ENCODE measurements at regions of chr16 and their contacts with region 1.

Region 1: DNA sequence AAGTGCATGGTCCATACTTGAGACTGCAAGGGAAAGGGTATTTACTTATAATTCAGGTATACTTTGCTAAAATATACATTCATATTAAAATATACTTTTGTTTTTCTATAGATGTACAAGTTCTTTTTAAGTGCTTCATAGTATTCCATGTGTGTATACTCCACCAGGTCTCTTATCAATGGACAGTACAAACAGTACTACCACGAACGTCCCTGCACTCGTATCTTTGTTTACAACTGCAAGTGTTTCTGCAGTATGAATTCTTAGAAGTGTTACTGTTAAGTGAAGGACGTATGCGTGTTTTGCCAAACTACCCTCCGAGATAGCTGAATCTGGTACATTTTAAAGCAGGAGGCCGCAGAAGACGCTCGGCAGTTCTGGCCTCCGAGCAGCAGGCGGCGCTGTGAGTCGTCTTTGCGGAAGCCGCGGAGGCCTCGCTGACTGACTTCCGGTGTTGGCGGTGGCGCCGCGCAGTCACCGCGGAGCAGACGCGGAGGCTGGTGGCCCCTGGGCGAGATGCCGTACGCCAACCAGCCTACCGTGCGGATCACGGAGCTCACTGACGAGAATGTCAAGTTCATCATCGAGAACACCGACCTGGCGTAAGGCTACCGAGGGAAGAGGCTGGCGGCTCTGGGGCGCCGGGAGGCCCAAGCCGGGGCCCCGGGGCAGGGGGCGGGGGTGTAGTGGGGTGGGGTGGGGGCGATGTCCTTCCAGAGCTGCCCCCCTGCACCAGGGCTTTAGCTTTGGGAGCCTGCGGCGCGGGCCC is at the start of gene POLR2C:
- DNase-seq: peak; percentile 95
- H3K4me3 Mint-ChIP-seq: peak within 1 kb of the TSS; percentile 100
- H3K27ac Mint-ChIP-seq: peak within 1 kb of the TSS; percentile 99
- H3K4me1 Mint-ChIP-seq: peaks cover 30% of the 10 kb centered on the region
- H3K27me3 Mint-ChIP-seq: no peaks in the 10 kb centered on the region
- total RNA-seq, gene POLR2C: 49.4 to 53.0 TPM

Region 2: DNA sequence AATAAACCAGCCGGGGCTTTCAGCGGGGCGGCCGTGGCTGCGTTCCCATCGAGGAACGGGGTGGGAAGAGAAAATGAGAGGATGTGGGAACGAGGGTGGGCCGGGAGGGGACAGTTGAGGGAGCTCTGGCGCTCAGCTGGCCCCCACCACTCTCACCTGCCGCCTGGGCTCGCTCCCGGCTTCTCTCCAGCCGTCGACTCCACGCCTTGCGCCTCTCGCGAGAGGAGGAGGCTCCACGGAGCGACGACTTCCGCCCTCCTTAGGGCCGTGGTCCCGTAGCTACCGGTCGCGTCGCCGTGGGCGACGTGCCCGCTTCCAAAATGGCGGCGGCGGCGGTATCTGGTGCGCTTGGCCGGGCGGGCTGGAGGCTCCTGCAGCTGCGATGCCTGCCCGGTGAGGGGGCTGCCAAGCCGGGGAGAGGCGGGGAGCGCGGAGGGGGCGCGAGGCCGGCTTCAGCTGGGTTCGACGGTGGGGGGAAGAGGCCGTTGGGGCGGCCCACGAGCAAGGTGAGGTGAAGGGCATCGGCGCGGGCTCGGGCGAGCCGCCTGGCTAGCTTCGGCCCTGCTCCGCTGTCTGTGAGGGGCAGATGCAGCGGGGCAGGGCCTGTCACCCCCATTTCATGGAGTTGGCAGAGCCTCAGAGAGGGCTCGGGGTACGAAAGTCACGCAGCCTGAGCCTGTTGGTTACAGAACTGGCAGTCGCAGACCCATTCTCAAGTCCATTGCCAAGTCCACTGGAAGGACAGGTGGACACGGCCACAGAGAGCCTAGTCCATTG is 15.0 kb before region 1 on chr16 and contains the starts of genes CIAPIN1 and COQ9:
- CTCF ChIA-PET with region 1: interaction called, 14 read pairs
- intact Hi-C with region 1: loop called (anchors 1 kb)
- DNase-seq: peak; percentile 96
- H3K4me3 Mint-ChIP-seq: peak within 1 kb of the TSS; percentile 86
- H3K27ac Mint-ChIP-seq: peak within 1 kb of the TSS; percentile 86
- H3K4me1 Mint-ChIP-seq: peaks cover 42% of the 10 kb centered on the region
- H3K27me3 Mint-ChIP-seq: no peaks in the 10 kb centered on the region
- total RNA-seq, gene CIAPIN1: 29.5 to 31.0 TPM
- total RNA-seq, gene COQ9: 30.6 TPM

Region 3: DNA sequence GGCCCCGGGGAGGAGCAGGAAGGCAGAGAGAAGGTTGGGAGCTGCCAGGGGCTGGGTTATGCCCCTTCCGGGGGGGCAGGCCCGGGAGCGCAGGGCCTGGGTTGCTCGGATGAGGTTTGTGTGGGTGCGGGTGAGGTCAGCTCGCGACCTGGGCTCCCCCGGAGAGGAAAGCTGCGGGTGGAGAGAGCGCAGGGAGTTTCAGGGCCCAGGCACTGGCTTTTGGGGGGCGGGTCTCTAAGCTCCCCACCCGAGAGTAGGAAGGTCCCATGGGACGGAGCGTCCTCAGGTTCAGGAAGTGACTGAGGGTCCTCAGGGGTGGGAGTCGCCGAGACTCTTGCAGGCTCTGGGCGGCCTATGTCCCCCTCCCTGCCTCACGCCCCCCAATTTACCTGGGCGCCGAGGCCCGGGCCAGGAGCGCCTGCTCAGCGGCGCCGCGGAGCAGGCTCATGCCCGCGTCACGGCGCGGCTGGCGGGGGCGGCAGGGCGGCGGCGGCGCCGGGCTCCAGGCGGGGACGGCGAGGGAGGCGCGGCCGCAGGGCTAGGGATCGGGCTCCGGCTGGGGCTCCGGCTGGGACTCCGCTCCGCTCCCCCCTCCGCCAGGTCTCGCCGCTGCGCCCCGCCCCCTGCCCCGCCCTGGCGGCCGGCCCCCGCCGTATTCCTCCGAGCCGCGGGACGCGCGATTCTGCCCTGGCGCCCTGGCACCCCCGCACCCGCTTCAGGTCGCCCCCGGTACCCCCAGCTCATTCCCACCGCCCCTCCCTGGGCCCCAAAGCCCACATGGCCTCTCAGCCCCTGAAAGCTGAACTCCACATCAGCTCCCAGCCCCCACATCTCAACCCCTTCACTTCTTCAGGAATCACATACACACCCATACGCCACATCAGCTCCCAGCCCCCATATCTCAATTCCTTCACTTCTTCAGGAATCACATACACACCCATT is 23.8 kb after region 1 on chr16 and contains the start of gene DOK4:
- CTCF ChIA-PET with region 1: interaction called, 5 read pairs
- intact Hi-C with region 1: loop called (anchors 1 kb)
- DNase-seq: peak; percentile 79
- H3K4me3 Mint-ChIP-seq: peak within 1 kb of the TSS; percentile 77
- H3K27ac Mint-ChIP-seq: peak within 1 kb of the TSS; percentile 63
- H3K4me1 Mint-ChIP-seq: peaks cover 18% of the 10 kb centered on the region
- H3K27me3 Mint-ChIP-seq: no peaks in the 10 kb centered on the region
- total RNA-seq, gene DOK4: 5.0 to 6.2 TPM

Region 4: GRCh38 chr16:57519796-57520360 is 57.5 kb after region 1 on chr16:
- CTCF ChIA-PET with region 1: interaction called, 63 read pairs
- intact Hi-C with region 1: no loop called
- DNase-seq: peak; percentile 87
- H3K4me3 Mint-ChIP-seq: no peak overlapping the region
- H3K27ac Mint-ChIP-seq: peak overlapping the region; percentile 73
- H3K4me1 Mint-ChIP-seq: peaks cover 4% of the 10 kb centered on the region
- H3K27me3 Mint-ChIP-seq: no peaks in the 10 kb centered on the region